CD4-positive, alpha-beta T cell (primary cell): ENCODE measurements at regions of chr1 and their contacts with region 1.

Region 1: GRCh38 chr1:109041621-109042468 is at the start of gene WDR47:
- DNase-seq: peak; percentile 91 to 99 (median 95)
- ATAC-seq: peak; percentile 97
- H3K4me3 ChIP-seq: peak within 1 kb of the TSS; percentile 99
- H3K4me3 Mint-ChIP-seq: peak within 1 kb of the TSS; percentile 97
- H3K27ac ChIP-seq: peak within 1 kb of the TSS; percentile 69 to 79
- H3K27ac Mint-ChIP-seq: peak within 1 kb of the TSS; percentile 91
- H3K4me1 ChIP-seq: peaks cover 14% of the 10 kb centered on the region
- H3K4me1 Mint-ChIP-seq: peaks cover 22% of the 10 kb centered on the region
- H3K27me3 ChIP-seq: no peaks in the 10 kb centered on the region
- H3K27me3 Mint-ChIP-seq: no peaks in the 10 kb centered on the region
- CTCF ChIP-seq: no peak
- total RNA-seq, gene WDR47: 16.2 to 18.7 TPM

Region 2: GRCh38 chr1:108746372-108747205 is 295.3 kb before region 1 on chr1 and contains the start of gene STXBP3:
- CTCF ChIA-PET with region 1: no interaction called
- POLR2A ChIA-PET with region 1: no interaction called
- intact Hi-C with region 1: loop called in 1 of 2 experiments (anchors 5 kb)
- DNase-seq: peak; percentile 99 to 100 (median 100)
- ATAC-seq: peak; percentile 95
- H3K4me3 ChIP-seq: peak within 1 kb of the TSS; percentile 92
- H3K4me3 Mint-ChIP-seq: peak within 1 kb of the TSS; percentile 97
- H3K27ac ChIP-seq: peak within 1 kb of the TSS; percentile 90 to 95
- H3K27ac Mint-ChIP-seq: peak within 1 kb of the TSS; percentile 91
- H3K4me1 ChIP-seq: peaks cover 14% of the 10 kb centered on the region
- H3K4me1 Mint-ChIP-seq: peaks cover 44% of the 10 kb centered on the region
- H3K27me3 ChIP-seq: no peaks in the 10 kb centered on the region
- H3K27me3 Mint-ChIP-seq: no peaks in the 10 kb centered on the region
- CTCF ChIP-seq: peak; percentile 92
- total RNA-seq, gene STXBP3: 41.6 to 50.5 TPM

Region 3: DNA sequence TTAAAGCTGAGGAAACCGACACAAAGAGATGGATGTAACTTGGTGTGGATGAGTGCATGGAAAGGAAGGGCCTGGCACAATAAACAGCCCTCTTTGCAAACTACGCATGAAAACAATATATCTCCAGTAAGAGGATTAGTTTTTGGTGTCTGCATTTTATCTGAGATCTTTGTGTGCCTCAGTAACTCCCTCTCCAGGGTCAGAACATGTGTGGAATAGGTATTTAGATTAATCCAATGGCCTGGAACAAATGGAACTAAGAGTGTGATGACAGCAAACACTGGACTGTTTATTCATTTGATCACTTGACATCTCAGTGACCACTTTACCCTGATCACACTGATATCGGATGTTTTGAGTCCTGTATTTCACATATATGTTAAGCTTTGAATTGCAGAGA is 230.2 kb before region 1 on chr1:
- CTCF ChIA-PET with region 1: no interaction called
- POLR2A ChIA-PET with region 1: no interaction called
- intact Hi-C with region 1: no loop called
- DNase-seq: no peak
- ATAC-seq: no peak
- H3K4me3 ChIP-seq: no peak overlapping the region
- H3K4me3 Mint-ChIP-seq: no peak overlapping the region
- H3K27ac ChIP-seq: no peak overlapping the region
- H3K27ac Mint-ChIP-seq: no peak overlapping the region
- H3K4me1 ChIP-seq: no peaks in the 10 kb centered on the region
- H3K4me1 Mint-ChIP-seq: no peaks in the 10 kb centered on the region
- H3K27me3 ChIP-seq: no peaks in the 10 kb centered on the region
- H3K27me3 Mint-ChIP-seq: no peaks in the 10 kb centered on the region
- CTCF ChIP-seq: no peak

Region 4: GRCh38 chr1:108963052-108963686 is 78.7 kb before region 1 on chr1 and contains the start of gene CLCC1:
- CTCF ChIA-PET with region 1: interaction called, 3 read pairs
- POLR2A ChIA-PET with region 1: interaction called, 20 read pairs
- intact Hi-C with region 1: loop called (anchors 2 to 5 kb)
- DNase-seq: peak; percentile 80 to 97 (median 88)
- ATAC-seq: peak; percentile 93
- H3K4me3 ChIP-seq: peak within 1 kb of the TSS; percentile 59
- H3K4me3 Mint-ChIP-seq: peak within 1 kb of the TSS; percentile 94
- H3K27ac ChIP-seq: peak within 1 kb of the TSS; percentile 64 to 79
- H3K27ac Mint-ChIP-seq: peak within 1 kb of the TSS; percentile 93
- H3K4me1 ChIP-seq: peaks cover 31% of the 10 kb centered on the region
- H3K4me1 Mint-ChIP-seq: peaks cover 47% of the 10 kb centered on the region
- H3K27me3 ChIP-seq: no peaks in the 10 kb centered on the region
- H3K27me3 Mint-ChIP-seq: no peaks in the 10 kb centered on the region
- CTCF ChIP-seq: no peak
- total RNA-seq, gene CLCC1: 8.6 to 9.1 TPM

Region 5: GRCh38 chr1:109090196-109091077 is 48.6 kb after region 1 on chr1 and contains the start of gene TMEM167B:
- CTCF ChIA-PET with region 1: no interaction called
- POLR2A ChIA-PET with region 1: interaction called, 20 read pairs
- intact Hi-C with region 1: loop called (anchors 2 to 5 kb)
- DNase-seq: peak; percentile 76 to 94 (median 82)
- ATAC-seq: peak; percentile 86
- H3K4me3 ChIP-seq: peak within 1 kb of the TSS; percentile 98
- H3K4me3 Mint-ChIP-seq: peak within 1 kb of the TSS; percentile 97
- H3K27ac ChIP-seq: peak within 1 kb of the TSS; percentile 84 to 98
- H3K27ac Mint-ChIP-seq: peak within 1 kb of the TSS; percentile 94
- H3K4me1 ChIP-seq: peaks cover 27% of the 10 kb centered on the region
- H3K4me1 Mint-ChIP-seq: peaks cover 44% of the 10 kb centered on the region
- H3K27me3 ChIP-seq: no peaks in the 10 kb centered on the region
- H3K27me3 Mint-ChIP-seq: no peaks in the 10 kb centered on the region
- CTCF ChIP-seq: no peak
- total RNA-seq, gene TMEM167B: 70.2 to 71.0 TPM

Region 6: GRCh38 chr1:109213785-109214468 is 172.1 kb after region 1 on chr1 and contains the start of gene SARS1:
- CTCF ChIA-PET with region 1: no interaction called
- POLR2A ChIA-PET with region 1: interaction called, 11 read pairs
- intact Hi-C with region 1: loop called in 1 of 2 experiments (anchors 5 kb)
- DNase-seq: peak; percentile 75 to 95 (median 88)
- ATAC-seq: peak; percentile 82
- H3K4me3 ChIP-seq: peak within 1 kb of the TSS; percentile 81
- H3K4me3 Mint-ChIP-seq: peak within 1 kb of the TSS; percentile 99
- H3K27ac ChIP-seq: peak within 1 kb of the TSS; percentile 73 to 74
- H3K27ac Mint-ChIP-seq: peak within 1 kb of the TSS; percentile 90
- H3K4me1 ChIP-seq: peaks cover 33% of the 10 kb centered on the region
- H3K4me1 Mint-ChIP-seq: peaks cover 41% of the 10 kb centered on the region
- H3K27me3 ChIP-seq: no peaks in the 10 kb centered on the region
- H3K27me3 Mint-ChIP-seq: no peaks in the 10 kb centered on the region
- CTCF ChIP-seq: no peak
- total RNA-seq, gene SARS1: 122 to 131 TPM